ENCODE measurements at regions of chr22 and their contacts with region 1.

Region 1: DNA sequence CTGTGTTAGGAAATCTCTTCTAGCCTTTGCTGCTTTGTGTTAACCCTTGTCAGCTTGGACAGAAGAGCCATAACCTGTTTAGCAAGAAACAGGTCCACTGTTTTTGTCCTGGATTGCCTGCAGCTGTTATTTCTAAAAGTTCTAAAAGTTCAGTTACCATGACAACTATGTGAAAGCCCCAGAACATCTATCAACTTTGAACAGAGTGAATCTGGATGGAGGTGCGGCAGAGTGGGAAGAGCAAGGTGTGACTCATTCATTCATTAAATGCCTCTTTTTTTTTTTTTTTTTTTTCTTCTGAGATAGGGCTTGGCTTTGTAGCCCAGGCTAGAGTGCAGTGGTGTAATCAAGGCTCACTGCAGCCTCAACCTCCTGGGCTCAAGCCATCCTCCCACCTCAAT is 50.5 kb downstream of the RBX1 start:
- DNase-seq: peak; percentile 64 to 71
- H3K4me3 ChIP-seq: no peak overlapping the region
- H3K4me3 Mint-ChIP-seq: peak overlapping the region; percentile 62
- H3K27ac Mint-ChIP-seq: peak overlapping the region; percentile 77
- H3K4me1 ChIP-seq: peaks cover 18% of the 10 kb centered on the region
- H3K4me1 Mint-ChIP-seq: peaks cover 21% of the 10 kb centered on the region
- H3K27me3 ChIP-seq: no peaks in the 10 kb centered on the region
- H3K27me3 Mint-ChIP-seq: no peaks in the 10 kb centered on the region
- CTCF ChIP-seq: no peak

Region 2: GRCh38 chr22:40950962-40951794 is 50.5 kb before region 1 on chr22 and contains the start of gene RBX1:
- CTCF ChIA-PET with region 1: no interaction called
- POLR2A ChIA-PET with region 1: interaction called, 12 read pairs
- intact Hi-C with region 1: loop called (anchors 2 kb)
- DNase-seq: peak; percentile 97 to 98
- H3K4me3 ChIP-seq: peak within 1 kb of the TSS; percentile 90
- H3K4me3 Mint-ChIP-seq: peak within 1 kb of the TSS; percentile 100
- H3K27ac Mint-ChIP-seq: peak within 1 kb of the TSS; percentile 100
- H3K4me1 ChIP-seq: no peaks in the 10 kb centered on the region
- H3K4me1 Mint-ChIP-seq: peaks cover 14% of the 10 kb centered on the region
- H3K27me3 ChIP-seq: no peaks in the 10 kb centered on the region
- H3K27me3 Mint-ChIP-seq: no peaks in the 10 kb centered on the region
- CTCF ChIP-seq: no peak
- total RNA-seq, gene RBX1: 69.1 and 70.0 TPM in 2 replicates

Region 3: GRCh38 chr22:41022470-41023298 is 21.0 kb after region 1 on chr22:
- CTCF ChIA-PET with region 1: interaction called, 6 read pairs
- POLR2A ChIA-PET with region 1: interaction called, 21 read pairs
- intact Hi-C with region 1: no loop called
- DNase-seq: peak; percentile 96 to 98
- H3K4me3 ChIP-seq: peak overlapping the region; percentile 81
- H3K4me3 Mint-ChIP-seq: peak overlapping the region; percentile 99
- H3K27ac Mint-ChIP-seq: peak overlapping the region; percentile 100
- H3K4me1 ChIP-seq: peaks cover 4% of the 10 kb centered on the region; the same call in 1 of the 2 replicates
- H3K4me1 Mint-ChIP-seq: peaks cover 15% of the 10 kb centered on the region
- H3K27me3 ChIP-seq: no peaks in the 10 kb centered on the region; the same call in 1 of the 2 replicates
- H3K27me3 Mint-ChIP-seq: no peaks in the 10 kb centered on the region
- CTCF ChIP-seq: no peak

Region 4: GRCh38 chr22:41091132-41092022 is 89.7 kb after region 1 on chr22:
- CTCF ChIA-PET with region 1: no interaction called
- POLR2A ChIA-PET with region 1: interaction called, 6 read pairs
- intact Hi-C with region 1: loop called (anchors 1 kb)
- DNase-seq: peak; percentile 97 to 98
- H3K4me3 ChIP-seq: peak overlapping the region; percentile 97
- H3K4me3 Mint-ChIP-seq: peak overlapping the region; percentile 79
- H3K27ac Mint-ChIP-seq: peak overlapping the region; percentile 96
- H3K4me1 ChIP-seq: 0 out of 2 replicates have a peak, but pooled peaks cover 3% of the 10 kb centered on the region
- H3K4me1 Mint-ChIP-seq: peaks cover 6% of the 10 kb centered on the region
- H3K27me3 ChIP-seq: no peaks in the 10 kb centered on the region
- H3K27me3 Mint-ChIP-seq: no peaks in the 10 kb centered on the region
- CTCF ChIP-seq: no peak

Region 5: GRCh38 chr22:41666661-41667258 is 665.0 kb after region 1 on chr22:
- CTCF ChIA-PET with region 1: no interaction called
- POLR2A ChIA-PET with region 1: interaction called, 11 read pairs
- intact Hi-C with region 1: no loop called
- DNase-seq: peak; percentile 76 to 79
- H3K4me3 ChIP-seq: no peak overlapping the region
- H3K4me3 Mint-ChIP-seq: peak overlapping the region; percentile 47
- H3K27ac Mint-ChIP-seq: peak overlapping the region; percentile 53
- H3K4me1 ChIP-seq: 0 out of 2 replicates have a peak, but pooled peaks cover 4% of the 10 kb centered on the region
- H3K4me1 Mint-ChIP-seq: peaks cover 6% of the 10 kb centered on the region
- H3K27me3 ChIP-seq: no peaks in the 10 kb centered on the region
- H3K27me3 Mint-ChIP-seq: no peaks in the 10 kb centered on the region
- CTCF ChIP-seq: peak; percentile 54 to 70